ENCODE measurements at regions of chr1 and their contacts with region 1.

Region 1: GRCh38 chr1:113917400-113918082 is 11.6 kb upstream of the HIPK1 start:
- DNase-seq: no peak
- ATAC-seq: peak; percentile 87
- H3K4me3 Mint-ChIP-seq: no peak overlapping the region
- H3K27ac Mint-ChIP-seq: no peak overlapping the region
- H3K4me1 Mint-ChIP-seq: peaks cover 8% of the 10 kb centered on the region
- H3K27me3 Mint-ChIP-seq: no peaks in the 10 kb centered on the region

Region 2: DNA sequence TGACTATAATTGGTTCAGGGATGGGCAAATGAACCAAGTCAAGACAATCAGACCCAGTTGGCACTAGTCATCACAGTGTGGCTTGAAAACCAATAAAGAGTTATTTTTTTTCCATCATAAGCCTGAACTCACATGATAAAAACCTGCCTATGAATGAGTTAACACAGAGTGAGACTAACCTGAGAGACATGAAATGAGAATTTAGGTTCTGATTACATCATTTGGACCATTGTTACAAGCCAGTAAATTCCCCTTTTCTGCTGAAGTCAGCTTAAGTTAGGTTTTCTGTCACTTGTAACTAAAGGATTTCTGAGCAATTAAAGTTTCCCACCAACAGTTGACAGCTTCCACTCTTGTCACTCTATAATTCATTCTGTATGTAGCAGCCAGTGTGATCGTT is 95.6 kb before region 1 on chr1:
- CTCF ChIA-PET with region 1: no interaction called
- POLR2A ChIA-PET with region 1: no interaction called
- intact Hi-C with region 1: no loop called
- DNase-seq: no peak
- ATAC-seq: peak; percentile 65
- H3K4me3 Mint-ChIP-seq: no peak overlapping the region
- H3K27ac Mint-ChIP-seq: peak overlapping the region; percentile 48
- H3K4me1 Mint-ChIP-seq: peaks cover 10% of the 10 kb centered on the region
- H3K27me3 Mint-ChIP-seq: no peaks in the 10 kb centered on the region

Region 3: DNA sequence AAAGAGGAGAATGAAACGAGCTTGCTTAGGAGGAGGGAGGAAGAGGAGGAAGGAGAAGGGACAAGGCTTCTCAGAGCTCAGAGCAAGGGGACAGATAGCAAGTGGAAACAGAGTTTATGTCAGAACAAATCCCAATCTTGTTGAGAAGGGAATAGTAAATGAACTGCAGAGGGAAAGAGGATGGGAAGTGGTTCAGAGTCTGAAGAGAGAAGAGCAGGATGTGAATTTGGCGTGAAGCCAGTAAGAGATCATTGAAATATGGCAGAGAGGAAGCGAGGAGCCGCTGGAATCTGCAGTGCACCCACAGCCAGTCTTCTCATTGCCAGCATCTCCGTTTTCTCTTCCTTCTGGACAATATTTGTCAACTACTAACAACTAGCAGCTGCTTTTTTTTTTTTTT is 80.8 kb after region 1 on chr1:
- CTCF ChIA-PET with region 1: no interaction called
- POLR2A ChIA-PET with region 1: no interaction called
- intact Hi-C with region 1: no loop called
- DNase-seq: no peak
- ATAC-seq: no peak
- H3K4me3 Mint-ChIP-seq: no peak overlapping the region
- H3K27ac Mint-ChIP-seq: no peak overlapping the region
- H3K4me1 Mint-ChIP-seq: peaks cover 3% of the 10 kb centered on the region
- H3K27me3 Mint-ChIP-seq: peaks cover 3% of the 10 kb centered on the region

Region 4: GRCh38 chr1:114114185-114115094 is 196.9 kb after region 1 on chr1:
- CTCF ChIA-PET with region 1: no interaction called
- POLR2A ChIA-PET with region 1: no interaction called
- intact Hi-C with region 1: loop called in 1 of 2 experiments (anchors 5 kb)
- DNase-seq: no peak
- ATAC-seq: no peak
- H3K4me3 Mint-ChIP-seq: no peak overlapping the region
- H3K27ac Mint-ChIP-seq: no peak overlapping the region
- H3K4me1 Mint-ChIP-seq: peaks cover 7% of the 10 kb centered on the region
- H3K27me3 Mint-ChIP-seq: no peaks in the 10 kb centered on the region

Region 5: DNA sequence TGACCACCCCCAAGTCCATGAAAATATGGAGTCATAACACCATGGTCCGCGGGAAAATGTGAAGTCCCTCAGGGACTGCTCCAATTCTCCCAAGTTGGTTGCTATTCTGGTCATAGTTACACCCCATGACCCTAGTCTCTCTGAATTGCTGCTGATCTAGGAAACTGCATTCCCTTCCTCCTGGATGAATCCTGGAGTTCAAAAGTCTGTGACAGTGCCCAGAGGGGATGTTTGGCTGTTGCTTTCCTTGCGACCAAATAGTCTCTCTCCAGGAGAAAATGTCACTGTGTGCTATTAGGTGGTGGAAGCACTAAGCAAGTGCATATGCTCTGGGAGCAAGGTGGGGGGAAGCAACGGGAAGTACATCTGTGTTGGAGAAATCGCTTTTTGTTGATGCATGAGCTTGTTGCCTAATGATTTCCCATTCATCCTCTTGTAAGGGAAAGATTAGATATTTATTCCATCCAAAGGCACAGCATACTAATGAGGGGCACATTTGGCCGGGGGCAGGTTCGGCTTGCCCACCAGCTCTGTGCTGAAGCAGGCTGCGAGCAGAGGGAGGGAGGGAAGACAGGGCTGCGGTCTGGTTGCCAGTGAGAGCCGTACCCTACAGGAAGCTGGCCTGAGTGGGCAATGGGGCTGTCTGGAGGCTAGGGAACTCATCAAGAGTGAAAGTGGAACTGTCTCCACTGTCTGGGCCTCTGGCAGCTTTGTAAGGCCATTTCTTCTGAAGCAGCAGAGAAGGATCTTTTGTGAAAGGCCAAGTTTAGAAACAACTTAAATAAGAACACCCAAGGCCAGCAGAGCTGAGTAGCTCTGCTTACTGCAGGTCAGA is 208.9 kb after region 1 on chr1:
- CTCF ChIA-PET with region 1: no interaction called
- POLR2A ChIA-PET with region 1: no interaction called
- intact Hi-C with region 1: no loop called
- DNase-seq: no peak
- ATAC-seq: no peak
- H3K4me3 Mint-ChIP-seq: no peak overlapping the region
- H3K27ac Mint-ChIP-seq: no peak overlapping the region
- H3K4me1 Mint-ChIP-seq: peaks cover 7% of the 10 kb centered on the region
- H3K27me3 Mint-ChIP-seq: no peaks in the 10 kb centered on the region